Left ventricle myocardium superior (tissue), 1 donor: ENCODE measurements at regions of chr20 and their contacts with region 1.

Region 1: GRCh38 chr20:354298-355064 is 7.6 kb downstream of the NRSN2 start:
- DNase-seq: peak; percentile 74
- ATAC-seq: peak; percentile 94

Region 2: GRCh38 chr20:462199-462991 is 107.9 kb after region 1 on chr20 and contains the start of gene TBC1D20:
- intact Hi-C with region 1: no loop called
- DNase-seq: peak; percentile 92
- ATAC-seq: peak; percentile 97
- total RNA-seq, gene TBC1D20: 23.3 TPM

Region 3: DNA sequence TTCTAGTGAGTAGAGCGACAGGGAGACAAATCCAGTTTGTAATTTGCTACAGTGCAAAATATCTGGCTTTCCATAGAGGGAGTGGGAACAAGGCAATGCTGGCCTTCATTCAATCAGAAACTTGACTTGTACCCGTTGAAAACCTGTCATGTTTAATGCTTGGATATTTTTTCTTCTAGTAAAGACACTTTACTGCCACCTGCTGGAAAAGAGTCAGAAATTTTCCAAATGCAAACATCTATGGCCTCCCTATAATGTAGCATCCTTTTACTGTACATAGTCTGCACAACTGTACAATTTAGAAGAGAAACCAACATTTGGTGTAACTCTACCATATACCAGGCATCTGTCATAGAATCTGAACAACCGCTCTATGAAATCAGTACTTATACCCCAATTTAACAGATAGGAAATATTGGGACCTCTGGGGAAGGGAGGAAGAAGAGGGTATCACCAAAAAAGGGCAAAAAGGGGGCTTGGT is 124.5 kb after region 1 on chr20:
- intact Hi-C with region 1: loop called (anchors 5 kb)
- DNase-seq: no peak
- ATAC-seq: peak; percentile 42